ENCODE measurements at regions of chr9 and their contacts with region 1.

Region 1: DNA sequence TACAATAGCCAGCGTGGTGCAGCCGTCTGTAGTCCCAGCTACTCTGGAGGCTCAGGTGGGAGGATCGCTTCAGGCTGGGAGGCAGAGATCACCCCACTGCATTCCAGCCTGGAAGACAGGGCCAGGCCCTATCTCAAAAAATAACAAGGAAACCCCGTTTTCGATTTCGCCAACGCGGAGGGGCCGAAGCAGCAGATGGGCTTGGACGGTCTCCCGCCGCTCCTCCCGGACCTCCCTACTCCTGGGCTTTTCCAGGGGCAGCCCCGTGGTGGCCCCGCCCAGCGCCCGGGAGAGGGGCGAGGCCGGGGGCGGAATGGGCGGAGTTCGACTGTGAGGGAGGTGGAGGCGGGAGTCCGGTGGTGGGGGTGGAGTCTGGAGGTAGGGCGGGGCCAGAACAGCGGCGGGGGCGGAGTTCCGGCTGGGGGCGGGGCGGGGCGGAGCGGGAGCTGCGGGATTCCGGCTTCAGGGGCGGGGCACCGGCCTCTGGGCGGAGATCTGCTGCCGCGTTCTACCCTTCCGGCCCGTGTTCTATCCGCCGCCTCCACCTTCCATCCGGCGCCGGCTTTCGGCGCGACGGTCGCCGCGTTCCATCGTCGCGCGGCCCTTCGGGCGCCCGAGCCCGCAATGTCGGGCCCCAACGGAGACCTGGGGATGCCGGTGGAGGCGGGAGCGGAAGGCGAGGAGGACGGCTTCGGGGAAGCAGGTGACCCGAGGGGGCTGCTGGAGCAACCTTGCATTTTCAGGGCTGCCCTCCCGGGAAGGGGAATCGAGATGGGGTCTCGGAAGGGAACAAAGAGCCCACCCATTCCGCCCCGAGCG is at the start of gene BBLN:
- DNase-seq: peak; percentile 84 to 94 (median 89)
- ATAC-seq: peak; percentile 81 to 87
- H3K4me3 Mint-ChIP-seq: peak within 1 kb of the TSS; percentile 78 to 90 (median 81)
- H3K27ac Mint-ChIP-seq: peak within 1 kb of the TSS; percentile 82 to 96 (median 92)
- H3K4me1 Mint-ChIP-seq: peaks cover 10 to 24% (median 22%) of the 10 kb centered on the region in 4 donors
- H3K27me3 Mint-ChIP-seq: no peaks in the 10 kb centered on the region
- polyA plus RNA-seq, gene BBLN: 116 to 122 (median 121) TPM

Region 2: GRCh38 chr9:128127990-128128835 is 31.8 kb before region 1 on chr9:
- POLR2A ChIA-PET with region 1: interaction called, 14 read pairs
- DNase-seq: peak; percentile 75 to 98 (median 88)
- ATAC-seq: peak; percentile 76 to 85
- H3K4me3 Mint-ChIP-seq: peak overlapping the region; percentile 92 to 99 (median 98)
- H3K27ac Mint-ChIP-seq: peak overlapping the region; percentile 98 to 100 (median 99)
- H3K4me1 Mint-ChIP-seq: peaks cover 20 to 46% (median 34%) of the 10 kb centered on the region in 4 donors
- H3K27me3 Mint-ChIP-seq: peaks cover 0 to 3% (median 0%) of the 10 kb centered on the region in 5 donors

Region 3: DNA sequence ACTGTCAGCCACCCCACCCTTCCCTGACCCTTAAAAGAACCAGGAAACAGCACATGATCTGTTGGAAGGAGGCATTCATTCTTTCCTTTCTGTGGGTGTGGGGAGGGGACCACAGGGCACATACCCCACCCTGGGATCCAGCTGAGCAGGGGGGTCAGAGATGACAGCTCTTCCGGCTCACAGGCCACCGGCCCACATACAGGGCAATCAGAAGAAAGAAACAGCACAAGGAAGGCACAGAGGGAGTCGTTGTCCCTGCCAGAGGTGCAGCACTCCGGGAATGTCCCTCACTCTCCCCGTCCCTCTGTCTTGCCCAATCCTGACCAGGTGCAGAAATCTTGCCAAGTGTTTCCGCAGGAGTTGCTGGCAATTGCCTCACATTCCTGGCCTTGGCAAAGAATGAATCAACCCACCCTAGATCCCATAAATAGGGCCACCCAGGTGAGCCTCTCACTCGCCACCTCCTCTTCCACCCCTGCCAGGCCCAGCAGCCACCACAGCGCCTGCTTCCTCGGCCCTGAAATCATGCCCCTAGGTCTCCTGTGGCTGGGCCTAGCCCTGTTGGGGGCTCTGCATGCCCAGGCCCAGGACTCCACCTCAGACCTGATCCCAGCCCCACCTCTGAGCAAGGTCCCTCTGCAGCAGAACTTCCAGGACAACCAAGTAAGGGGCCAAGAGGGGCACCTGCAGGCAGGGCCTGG is 10.8 kb before region 1 on chr9 and contains the start of gene LCN2:
- POLR2A ChIA-PET with region 1: no interaction called
- DNase-seq: no peak
- ATAC-seq: no peak
- H3K4me3 Mint-ChIP-seq: no peak within 1 kb of the TSS
- H3K27ac Mint-ChIP-seq: peak within 1 kb of the TSS in 2 of 10 donors; percentile 50 to 52
- H3K4me1 Mint-ChIP-seq: peaks cover 0 to 14% (median 3%) of the 10 kb centered on the region in 4 donors
- H3K27me3 Mint-ChIP-seq: no peaks in the 10 kb centered on the region
- polyA plus RNA-seq, gene LCN2: not detected

Region 4: GRCh38 chr9:128191406-128192046 is 31.5 kb after region 1 on chr9 and contains the start of gene CIZ1:
- POLR2A ChIA-PET with region 1: interaction called, 11 read pairs
- DNase-seq: peak; percentile 44 to 81 (median 70)
- ATAC-seq: peak; percentile 90 to 93
- H3K4me3 Mint-ChIP-seq: peak within 1 kb of the TSS; percentile 87 to 97 (median 94)
- H3K27ac Mint-ChIP-seq: peak within 1 kb of the TSS; percentile 86 to 99 (median 92)
- H3K4me1 Mint-ChIP-seq: peaks cover 5 to 41% (median 25%) of the 10 kb centered on the region in 4 donors
- H3K27me3 Mint-ChIP-seq: no peaks in the 10 kb centered on the region
- polyA plus RNA-seq, gene CIZ1: 7.4 to 39.2 (median 13.2) TPM

Measured in naive thymus-derived CD8-positive, alpha-beta T cell (primary cell).